GM12878 (cell line): ENCODE measurements at regions of chr5 and their contacts with region 1.

Region 1: DNA sequence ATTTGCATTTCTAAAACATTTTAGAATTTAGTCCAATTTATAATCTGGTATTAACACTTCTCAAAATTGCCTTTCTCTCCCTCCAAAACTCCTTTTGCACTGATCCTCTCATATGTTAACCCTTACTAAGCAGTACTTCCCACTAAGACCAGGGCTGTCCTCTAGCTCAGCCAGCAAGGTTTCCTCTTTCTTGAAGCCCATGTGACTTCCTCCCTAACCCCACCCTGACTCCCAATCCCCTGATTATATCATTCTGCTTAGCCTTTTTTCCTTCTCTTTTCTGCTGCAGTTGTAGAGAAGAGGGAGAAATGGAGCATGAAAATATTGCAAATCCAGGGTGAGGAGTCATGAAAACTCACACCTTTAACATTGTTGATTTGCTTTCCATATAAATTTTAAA is 241.7 kb downstream of the MCTP1 start:
- DNase-seq: no peak
- ATAC-seq: peak; percentile 44; the same call in 2 of the 3 replicates
- H3K4me3 ChIP-seq: no peak overlapping the region
- H3K27ac ChIP-seq: no peak overlapping the region
- H3K4me1 ChIP-seq: no peaks in the 10 kb centered on the region; the same call in 1 of the 2 replicates
- H3K27me3 ChIP-seq: no peaks in the 10 kb centered on the region
- CTCF ChIP-seq: no peak
- EP300 ChIP-seq: no peak
- POLR2A ChIP-seq: no peak
- RAD21 ChIP-seq: no peak

Region 2: GRCh38 chr5:94983861-94984535 is 59.2 kb before region 1 on chr5:
- CTCF ChIA-PET with region 1: no interaction called
- POLR2A ChIA-PET with region 1: interaction called, 11 read pairs
- RAD21 ChIA-PET with region 1: no interaction called
- SMC1A ChIA-PET with region 1: interaction called, 5 read pairs
- in situ Hi-C with region 1: no loop called
- intact Hi-C with region 1: no loop called
- DNase-seq: no peak
- ATAC-seq: no peak
- H3K4me3 ChIP-seq: no peak overlapping the region
- H3K27ac ChIP-seq: no peak overlapping the region
- H3K4me1 ChIP-seq: no peaks in the 10 kb centered on the region
- H3K27me3 ChIP-seq: no peaks in the 10 kb centered on the region
- CTCF ChIP-seq: no peak
- EP300 ChIP-seq: no peak
- POLR2A ChIP-seq: no peak
- RAD21 ChIP-seq: no peak

Region 3: DNA sequence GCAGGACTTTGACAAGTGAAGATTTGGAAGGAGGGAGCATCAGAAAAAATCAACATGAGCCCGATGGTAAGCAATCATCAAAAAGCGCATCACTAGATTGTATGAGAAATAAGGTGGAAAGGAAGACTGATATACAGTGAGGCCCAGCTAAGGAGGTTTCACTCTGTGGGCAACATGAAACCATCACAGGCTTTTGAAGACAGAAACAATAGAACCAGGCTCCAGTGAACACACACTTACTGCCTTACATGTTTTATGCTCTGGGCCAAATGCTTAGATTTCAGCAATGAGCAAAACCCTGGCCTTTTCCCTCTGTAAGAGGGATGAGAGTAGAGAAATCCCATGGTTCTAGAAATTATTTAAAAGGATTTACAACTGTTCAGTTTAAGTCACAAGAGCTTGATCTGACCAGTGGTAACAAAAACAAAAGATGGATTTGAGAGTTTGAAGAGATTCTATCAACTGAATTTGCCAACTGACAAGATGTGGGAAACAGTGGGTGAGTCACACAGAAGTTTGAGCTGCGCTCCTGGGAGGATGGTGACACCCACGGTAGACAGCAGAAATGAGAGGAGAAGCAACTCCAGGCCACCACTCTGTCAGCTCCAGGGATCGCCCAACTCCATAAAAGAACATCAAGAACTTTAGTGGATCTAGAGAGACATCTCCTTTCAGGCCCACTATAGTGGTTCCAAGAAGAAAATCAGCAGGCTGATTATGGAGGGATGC is 20.1 kb before region 1 on chr5:
- CTCF ChIA-PET with region 1: interaction called, 7 read pairs
- POLR2A ChIA-PET with region 1: interaction called, 7 read pairs
- RAD21 ChIA-PET with region 1: interaction called, 5 read pairs
- SMC1A ChIA-PET with region 1: interaction called, 24 read pairs
- in situ Hi-C with region 1: no loop called
- intact Hi-C with region 1: no loop called
- DNase-seq: peak; percentile 66
- ATAC-seq: peak; percentile 89
- H3K4me3 ChIP-seq: peak overlapping the region; percentile 32; the same call in 1 of the 2 replicates
- H3K27ac ChIP-seq: peak overlapping the region; percentile 40
- H3K4me1 ChIP-seq: peaks cover 30% of the 10 kb centered on the region
- H3K27me3 ChIP-seq: no peaks in the 10 kb centered on the region
- CTCF ChIP-seq: no peak
- EP300 ChIP-seq: no peak
- POLR2A ChIP-seq: no peak
- RAD21 ChIP-seq: no peak

Region 4: DNA sequence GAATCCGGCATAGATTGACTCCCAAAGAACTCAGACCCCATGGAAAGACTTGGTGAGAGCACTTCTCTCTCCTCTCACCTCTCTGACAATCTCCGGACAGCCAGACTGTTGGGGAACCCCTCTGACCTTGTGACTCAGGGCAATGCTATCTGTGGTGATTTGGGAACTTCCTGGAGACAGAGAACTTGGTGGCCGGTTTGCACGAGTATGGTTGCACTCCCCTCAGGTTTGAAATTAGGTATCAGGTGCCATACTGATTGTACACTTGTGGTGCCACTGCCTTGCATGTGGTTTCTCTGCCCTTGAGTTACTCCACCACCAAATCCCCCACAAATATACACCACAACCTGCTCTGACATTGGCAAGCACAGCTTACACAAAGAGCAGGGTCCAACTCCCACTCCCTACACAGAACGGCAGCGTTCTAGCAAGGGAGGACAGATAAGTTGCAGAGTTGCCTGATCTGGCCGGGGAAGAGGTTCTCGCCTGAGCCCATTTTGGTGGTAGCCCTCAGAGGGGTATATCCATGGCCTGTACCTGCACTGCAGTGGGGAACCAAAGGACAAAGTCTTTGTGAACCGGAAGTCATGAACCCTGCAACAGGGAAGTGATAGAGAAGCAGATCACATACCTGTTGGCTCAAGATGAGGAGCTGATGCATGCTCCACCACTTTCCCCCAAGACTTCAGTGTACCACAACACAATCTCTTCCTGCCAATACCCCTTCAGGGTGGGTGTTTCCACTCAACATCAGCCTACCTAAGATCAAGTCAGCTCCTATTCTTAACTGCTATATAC is 13.5 kb before region 1 on chr5:
- CTCF ChIA-PET with region 1: interaction called, 7 read pairs
- POLR2A ChIA-PET with region 1: interaction called, 4 read pairs
- RAD21 ChIA-PET with region 1: interaction called, 18 read pairs
- SMC1A ChIA-PET with region 1: interaction called, 24 read pairs
- in situ Hi-C with region 1: no loop called
- intact Hi-C with region 1: no loop called
- DNase-seq: peak; percentile 56
- ATAC-seq: peak; percentile 81
- H3K4me3 ChIP-seq: no peak overlapping the region; the same call in 1 of the 2 replicates
- H3K27ac ChIP-seq: peak overlapping the region; percentile 56
- H3K4me1 ChIP-seq: peaks cover 35% of the 10 kb centered on the region
- H3K27me3 ChIP-seq: no peaks in the 10 kb centered on the region
- CTCF ChIP-seq: no peak
- EP300 ChIP-seq: peak in 1 of 2 experiments; percentile 32; a peak in 1 of 4 replicates
- POLR2A ChIP-seq: no peak
- RAD21 ChIP-seq: no peak

Region 5: GRCh38 chr5:95057615-95058014 is 14.4 kb after region 1 on chr5:
- CTCF ChIA-PET with region 1: interaction called, 46 read pairs
- POLR2A ChIA-PET with region 1: interaction called, 10 read pairs
- RAD21 ChIA-PET with region 1: no interaction called
- SMC1A ChIA-PET with region 1: interaction called, 73 read pairs
- in situ Hi-C with region 1: no loop called
- intact Hi-C with region 1: no loop called
- DNase-seq: no peak
- ATAC-seq: peak; percentile 50
- H3K4me3 ChIP-seq: no peak overlapping the region
- H3K27ac ChIP-seq: no peak overlapping the region
- H3K4me1 ChIP-seq: no peaks in the 10 kb centered on the region; the same call in 1 of the 2 replicates
- H3K27me3 ChIP-seq: no peaks in the 10 kb centered on the region
- CTCF ChIP-seq: no peak
- EP300 ChIP-seq: no peak
- POLR2A ChIP-seq: no peak
- RAD21 ChIP-seq: no peak

Region 6: DNA sequence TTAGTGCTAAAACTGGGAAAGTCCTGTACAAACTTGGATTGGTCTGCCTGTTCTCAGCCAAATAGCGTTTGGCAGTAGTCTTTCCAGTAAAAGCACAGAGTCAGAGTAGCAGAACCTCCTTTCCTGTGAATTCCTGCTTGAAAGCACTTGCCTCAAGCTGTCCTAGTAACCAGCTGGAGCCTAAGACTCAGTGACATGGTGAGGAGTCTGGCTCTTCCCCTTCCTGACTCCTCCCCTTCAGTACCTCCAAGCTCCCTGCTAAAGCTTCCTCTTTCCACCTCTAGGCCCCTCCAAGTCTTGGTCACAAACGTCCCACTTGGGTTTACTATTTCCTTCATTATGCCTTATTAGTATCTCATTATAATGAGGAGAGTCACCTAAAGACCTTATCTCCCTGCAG is 326.5 kb after region 1 on chr5:
- CTCF ChIA-PET with region 1: no interaction called
- POLR2A ChIA-PET with region 1: interaction called, 12 read pairs
- RAD21 ChIA-PET with region 1: no interaction called
- SMC1A ChIA-PET with region 1: no interaction called
- in situ Hi-C with region 1: no loop called
- intact Hi-C with region 1: no loop called
- DNase-seq: no peak
- ATAC-seq: no peak
- H3K4me3 ChIP-seq: no peak overlapping the region
- H3K27ac ChIP-seq: no peak overlapping the region
- H3K4me1 ChIP-seq: no peaks in the 10 kb centered on the region
- H3K27me3 ChIP-seq: no peaks in the 10 kb centered on the region; a peak in 3 of 4 replicates
- CTCF ChIP-seq: no peak
- EP300 ChIP-seq: no peak
- POLR2A ChIP-seq: no peak
- RAD21 ChIP-seq: no peak